ENCODE measurements at regions of chr21 and their contacts with region 1.

Region 1: GRCh38 chr21:37407719-37408420 is 41.3 kb downstream of the DYRK1A start:
- DNase-seq: no peak
- ATAC-seq: peak; percentile 52
- H3K4me3 ChIP-seq: no peak overlapping the region
- H3K27ac ChIP-seq: peak overlapping the region; percentile 53; the same call in 1 of the 3 replicates
- H3K4me1 ChIP-seq: peaks cover 3 to 24% of the 10 kb centered on the region in 2 experiments
- H3K27me3 ChIP-seq: no peaks in the 10 kb centered on the region
- CTCF ChIP-seq: no peak
- EP300 ChIP-seq: no peak
- POLR2A ChIP-seq: no peak
- RAD21 ChIP-seq: no peak

Region 2: GRCh38 chr21:36079010-36079649 is 1328.7 kb before region 1 on chr21:
- CTCF ChIA-PET with region 1: no interaction called
- POLR2A ChIA-PET with region 1: no interaction called
- in situ Hi-C with region 1: no loop called
- intact Hi-C with region 1: no loop called
- DNase-seq: peak; percentile 36 to 66 (median 46)
- ATAC-seq: peak; percentile 76
- H3K4me3 ChIP-seq: 0 out of 2 replicates have a peak overlapping the region, but pooled peaks have one; percentile 10
- H3K27ac ChIP-seq: peak overlapping the region; percentile 70
- H3K4me1 ChIP-seq: peaks cover 7 to 43% of the 10 kb centered on the region in 2 experiments; a peak in 4 of 5 replicates
- H3K27me3 ChIP-seq: no peaks in the 10 kb centered on the region
- CTCF ChIP-seq: no peak
- EP300 ChIP-seq: 0 out of 2 replicates have a peak, but pooled peaks have one; percentile 3
- POLR2A ChIP-seq: peak; percentile 45; the same call in 1 of the 2 replicates
- RAD21 ChIP-seq: 0 out of 4 replicates have a peak, but pooled peaks of 1 of the 2 experiments have one; percentile 10

Region 3: GRCh38 chr21:37106998-37107397 is 300.9 kb before region 1 on chr21:
- CTCF ChIA-PET with region 1: no interaction called
- POLR2A ChIA-PET with region 1: no interaction called
- in situ Hi-C with region 1: no loop called
- intact Hi-C with region 1: no loop called
- DNase-seq: no peak
- ATAC-seq: no peak
- H3K4me3 ChIP-seq: no peak overlapping the region
- H3K27ac ChIP-seq: no peak overlapping the region
- H3K4me1 ChIP-seq: no peaks in the 10 kb centered on the region
- H3K27me3 ChIP-seq: no peaks in the 10 kb centered on the region
- CTCF ChIP-seq: no peak
- EP300 ChIP-seq: no peak
- POLR2A ChIP-seq: no peak
- RAD21 ChIP-seq: no peak

Region 4: DNA sequence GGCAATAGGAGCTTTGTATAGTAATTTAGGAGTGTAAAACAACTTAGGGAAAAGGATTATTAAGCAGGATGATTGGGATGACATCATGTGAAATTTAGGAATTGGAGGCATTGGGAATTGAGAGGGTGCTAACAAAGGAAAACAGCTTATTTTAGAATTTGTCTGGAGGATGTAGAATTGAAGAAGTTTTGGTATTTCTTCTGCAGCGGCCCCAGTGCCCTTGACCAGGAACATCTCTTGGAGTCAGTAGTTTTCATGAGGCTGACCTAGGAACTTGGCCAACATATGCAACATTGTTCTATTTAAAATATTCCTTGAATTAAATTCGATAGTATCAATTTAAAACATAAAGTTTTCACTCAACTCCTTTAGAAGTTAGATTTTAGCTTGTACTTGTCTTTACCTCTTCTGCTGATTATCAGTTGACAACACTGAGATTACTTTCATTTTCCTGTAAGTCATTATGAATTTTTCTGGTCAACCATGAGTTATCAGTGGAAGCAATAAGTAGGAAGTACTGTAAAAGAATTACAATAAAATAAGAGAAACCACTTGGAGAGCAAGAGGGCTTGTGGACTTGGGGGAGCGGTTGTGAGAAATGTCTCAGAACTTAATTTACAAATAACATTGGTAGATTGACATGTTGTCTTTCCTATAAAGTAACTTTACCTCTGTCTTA is 11.5 kb after region 1 on chr21:
- CTCF ChIA-PET with region 1: no interaction called
- POLR2A ChIA-PET with region 1: interaction called, 40 read pairs
- in situ Hi-C with region 1: no loop called
- intact Hi-C with region 1: no loop called
- DNase-seq: peak in 1 of 4 experiments; percentile 25
- ATAC-seq: peak; percentile 16; the same call in 2 of the 3 replicates
- H3K4me3 ChIP-seq: no peak overlapping the region
- H3K27ac ChIP-seq: peak overlapping the region; percentile 40; the same call in 2 of the 3 replicates
- H3K4me1 ChIP-seq: peaks cover 7 to 49% of the 10 kb centered on the region in 2 experiments
- H3K27me3 ChIP-seq: no peaks in the 10 kb centered on the region
- CTCF ChIP-seq: no peak
- EP300 ChIP-seq: 0 out of 2 replicates have a peak, but pooled peaks have one; percentile 16
- POLR2A ChIP-seq: no peak
- RAD21 ChIP-seq: no peak

Region 5: DNA sequence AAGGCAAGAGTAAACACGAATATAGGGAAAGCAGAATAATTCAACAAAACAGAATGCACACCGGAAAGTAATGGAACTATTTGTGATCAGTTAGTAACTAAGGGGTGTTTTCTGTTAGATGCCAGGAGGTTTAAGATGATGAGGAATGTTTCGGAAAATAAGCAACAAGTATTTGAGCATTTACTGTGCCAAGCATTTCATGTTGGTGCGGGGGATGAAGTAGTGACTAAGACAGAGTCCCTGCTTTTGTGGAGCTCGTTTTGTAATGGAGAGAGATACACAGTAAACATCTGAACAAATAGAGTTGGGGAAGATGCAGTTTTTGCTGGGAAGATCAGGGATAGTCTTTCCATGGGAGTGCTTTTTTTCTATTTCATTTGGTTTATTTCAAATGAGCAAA is 37.4 kb after region 1 on chr21:
- CTCF ChIA-PET with region 1: interaction called, 7 read pairs
- POLR2A ChIA-PET with region 1: no interaction called
- in situ Hi-C with region 1: no loop called
- intact Hi-C with region 1: loop called (anchors 5 kb)
- DNase-seq: no peak
- ATAC-seq: no peak
- H3K4me3 ChIP-seq: no peak overlapping the region
- H3K27ac ChIP-seq: no peak overlapping the region
- H3K4me1 ChIP-seq: peaks cover 15 to 40% of the 10 kb centered on the region in 2 experiments
- H3K27me3 ChIP-seq: no peaks in the 10 kb centered on the region
- CTCF ChIP-seq: no peak
- EP300 ChIP-seq: no peak
- POLR2A ChIP-seq: no peak
- RAD21 ChIP-seq: no peak